Adrenal gland (tissue), 19 donors: ENCODE measurements at regions of chr2 and their contacts with region 1.

Region 1: DNA sequence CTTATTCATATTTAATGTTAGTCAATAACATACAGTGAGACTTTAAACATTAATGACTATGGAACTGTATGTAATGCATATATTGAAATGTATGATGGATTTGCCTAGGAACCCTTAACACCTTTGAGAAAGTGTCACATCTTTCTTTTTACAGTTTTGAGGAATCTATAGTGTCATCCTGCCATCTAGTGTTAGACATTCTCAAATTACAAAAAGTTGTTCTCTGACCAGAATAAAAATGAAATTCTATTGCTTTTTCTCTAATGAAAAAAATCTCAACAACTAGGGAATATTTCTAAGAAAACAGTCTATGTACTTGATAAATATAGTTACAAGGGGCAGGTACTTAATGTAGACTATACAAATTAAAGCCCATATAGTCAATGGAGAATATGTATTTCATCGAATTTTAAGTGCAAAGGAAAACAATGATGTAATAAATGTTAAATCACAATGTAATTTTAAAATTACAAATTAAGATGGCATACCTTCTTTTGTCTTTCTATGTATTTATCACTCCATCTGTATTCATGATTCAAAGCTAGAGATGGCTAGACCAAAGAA is 5.1 kb upstream of the CALCRL start:
- DNase-seq: no peak
- H3K4me3 ChIP-seq: no peak overlapping the region
- H3K27ac ChIP-seq: no peak overlapping the region
- H3K4me1 ChIP-seq: no peaks in the 10 kb centered on the region
- H3K27me3 ChIP-seq: no peaks in the 10 kb centered on the region
- CTCF ChIP-seq: peak in 5 of 6 experiments; percentile 19 to 62 (median 25)
- POLR2A ChIP-seq: no peak

Region 2: GRCh38 chr2:186862869-186863709 is 590.1 kb before region 1 on chr2:
- intact Hi-C with region 1: loop called in 1 of 2 experiments (anchors 10 kb)
- DNase-seq: no peak
- H3K4me3 ChIP-seq: no peak overlapping the region
- H3K27ac ChIP-seq: no peak overlapping the region
- H3K4me1 ChIP-seq: no peaks in the 10 kb centered on the region
- H3K27me3 ChIP-seq: no peaks in the 10 kb centered on the region
- CTCF ChIP-seq: peak; percentile 35 to 78 (median 66)
- POLR2A ChIP-seq: no peak

Region 3: GRCh38 chr2:187698374-187699110 is 245.4 kb after region 1 on chr2:
- intact Hi-C with region 1: no loop called
- DNase-seq: no peak
- H3K4me3 ChIP-seq: no peak overlapping the region
- H3K27ac ChIP-seq: no peak overlapping the region
- H3K4me1 ChIP-seq: no peaks in the 10 kb centered on the region
- H3K27me3 ChIP-seq: no peaks in the 10 kb centered on the region
- CTCF ChIP-seq: no peak
- POLR2A ChIP-seq: no peak